Activated CD4-positive, alpha-beta memory T cell treated with anti-CD3 and anti-CD28 coated beads for 36 hours (primary cell): ENCODE measurements at regions of chr12 and their contacts with region 1.

Region 1: DNA sequence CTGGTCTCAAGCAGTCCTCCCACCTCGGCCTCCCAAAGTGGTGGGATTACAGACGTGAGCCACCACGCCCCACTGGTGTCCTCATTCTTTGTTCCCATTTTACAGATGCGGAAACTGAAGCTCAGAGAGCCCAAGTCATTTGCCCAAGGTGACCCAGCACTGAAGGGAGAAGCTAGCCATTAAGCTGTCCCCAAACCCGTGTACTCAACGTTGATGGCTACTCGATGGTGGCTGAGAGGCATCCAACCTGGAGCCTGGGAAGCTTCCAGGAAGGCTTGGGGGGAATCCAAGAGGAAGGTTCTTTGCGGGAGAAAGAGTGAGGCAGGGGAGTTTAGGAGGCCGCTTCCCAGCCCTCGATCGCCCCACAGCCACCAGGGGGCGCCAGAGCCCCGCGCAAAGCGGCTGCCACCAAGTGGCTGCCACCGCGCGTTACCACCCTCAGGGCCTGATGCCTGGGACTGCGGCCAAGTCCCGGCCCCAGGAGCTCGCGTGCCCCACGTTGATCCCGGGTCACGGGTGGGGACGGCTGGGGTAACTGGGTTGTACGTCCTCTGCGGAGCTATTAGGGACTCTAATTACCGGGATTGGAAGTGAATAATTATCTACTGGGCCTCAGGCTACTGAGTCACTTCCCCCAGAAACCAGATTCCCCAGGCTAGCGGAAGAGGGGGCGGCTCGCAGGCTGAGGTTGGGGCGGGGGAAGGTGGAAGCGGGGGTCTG is 8.8 kb upstream of the SH2B3 start:
- DNase-seq: peak; percentile 90
- H3K4me3 Mint-ChIP-seq: peak overlapping the region; percentile 65
- H3K27ac Mint-ChIP-seq: peak overlapping the region; percentile 51
- H3K4me1 Mint-ChIP-seq: peaks cover 25% of the 10 kb centered on the region
- H3K27me3 Mint-ChIP-seq: peaks cover 9% of the 10 kb centered on the region

Region 2: DNA sequence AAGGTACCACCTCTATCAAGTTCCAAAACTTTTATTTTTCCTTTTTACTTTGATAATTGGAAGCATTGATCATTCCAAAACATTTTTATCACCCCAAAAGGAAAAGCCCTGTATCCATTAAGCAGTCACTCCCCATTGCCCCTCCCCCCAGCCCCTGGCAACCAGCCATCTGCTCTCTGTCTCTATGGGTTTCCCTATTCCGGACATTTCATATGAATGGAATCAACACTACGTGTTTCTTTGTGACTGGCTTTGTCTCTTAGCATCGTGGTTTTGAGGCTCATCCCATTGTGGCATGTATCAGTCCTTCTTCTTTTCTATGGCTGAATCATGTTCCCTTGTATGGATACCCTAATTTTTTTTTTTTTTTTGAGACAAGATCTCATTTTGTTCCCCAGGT is 10.0 kb before region 1 on chr12:
- CTCF ChIA-PET with region 1: interaction called, 11 read pairs
- POLR2A ChIA-PET with region 1: no interaction called
- intact Hi-C with region 1: no loop called
- DNase-seq: no peak
- H3K4me3 Mint-ChIP-seq: no peak overlapping the region
- H3K27ac Mint-ChIP-seq: no peak overlapping the region
- H3K4me1 Mint-ChIP-seq: no peaks in the 10 kb centered on the region
- H3K27me3 Mint-ChIP-seq: no peaks in the 10 kb centered on the region

Region 3: DNA sequence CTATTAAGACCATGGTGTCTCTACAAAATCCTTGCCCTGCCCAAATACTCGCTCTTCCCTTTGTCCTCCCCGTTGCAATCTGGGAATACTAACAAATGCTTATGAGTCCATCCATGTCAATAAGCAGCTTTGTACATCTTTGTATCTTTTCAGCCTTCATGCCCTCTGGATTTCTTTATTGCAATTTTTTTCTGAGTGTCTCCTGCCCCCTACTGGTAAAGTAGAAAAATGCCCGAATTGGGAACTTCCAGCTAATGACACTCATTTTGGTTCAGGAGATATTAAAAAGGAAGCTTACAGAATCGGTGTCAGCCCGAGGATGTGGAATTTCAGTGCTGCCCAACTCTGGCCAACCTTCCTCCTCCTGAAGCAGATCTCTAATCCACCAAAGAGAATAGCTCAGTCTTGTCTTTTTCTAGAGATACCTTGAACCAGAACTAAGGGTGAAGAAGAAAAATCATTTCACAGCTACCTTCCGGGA is 54.8 kb after region 1 on chr12:
- CTCF ChIA-PET with region 1: interaction called, 1,161 read pairs
- POLR2A ChIA-PET with region 1: interaction called, 12 read pairs
- intact Hi-C with region 1: loop called (anchors 1 kb)
- DNase-seq: no peak
- H3K4me3 Mint-ChIP-seq: no peak overlapping the region
- H3K27ac Mint-ChIP-seq: peak overlapping the region; percentile 4
- H3K4me1 Mint-ChIP-seq: peaks cover 42% of the 10 kb centered on the region
- H3K27me3 Mint-ChIP-seq: no peaks in the 10 kb centered on the region

Region 4: GRCh38 chr12:111519083-111519482 is 122.2 kb after region 1 on chr12:
- CTCF ChIA-PET with region 1: interaction called, 21 read pairs
- POLR2A ChIA-PET with region 1: no interaction called
- intact Hi-C with region 1: no loop called
- DNase-seq: no peak
- H3K4me3 Mint-ChIP-seq: no peak overlapping the region
- H3K27ac Mint-ChIP-seq: no peak overlapping the region
- H3K4me1 Mint-ChIP-seq: no peaks in the 10 kb centered on the region
- H3K27me3 Mint-ChIP-seq: no peaks in the 10 kb centered on the region

Region 5: DNA sequence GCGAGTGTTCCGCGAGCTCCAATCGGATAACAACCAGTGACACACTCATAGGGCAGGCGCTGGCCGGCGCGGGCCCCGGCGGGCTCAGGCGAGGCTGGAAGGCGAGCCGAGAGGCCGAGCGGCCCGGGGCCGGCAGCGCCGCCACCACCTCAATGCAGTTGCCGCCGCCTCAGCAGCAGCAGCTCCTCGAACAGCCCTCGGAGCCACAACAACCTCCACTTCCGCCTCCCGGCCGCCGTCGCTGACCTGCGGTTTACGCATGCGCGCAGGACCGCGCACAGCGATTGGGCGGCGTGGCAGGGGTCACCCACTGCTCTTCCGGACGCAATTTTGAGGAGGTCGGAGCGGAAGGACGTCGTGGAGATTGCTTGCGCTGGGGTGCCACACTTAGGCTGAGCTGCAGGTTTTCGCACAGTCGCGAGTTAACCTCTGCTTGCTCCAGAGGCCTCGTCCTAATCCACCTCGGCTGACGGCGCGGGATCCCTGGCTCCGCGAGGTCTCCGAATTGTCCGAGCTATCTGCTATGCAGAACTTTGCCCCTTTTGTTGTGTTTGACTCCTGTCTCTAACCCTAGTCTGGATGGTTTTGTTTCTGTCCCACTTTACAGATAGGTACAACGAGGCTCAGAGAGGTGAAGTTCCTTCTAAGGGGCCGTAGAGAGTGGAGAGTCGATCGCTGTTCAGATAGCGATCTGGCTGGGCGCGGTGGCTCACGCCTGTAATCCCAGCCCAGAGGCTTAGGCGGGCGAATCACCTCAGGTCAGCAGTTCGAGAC is 289.0 kb after region 1 on chr12 and contains the starts of genes ACAD10 and BRAP:
- CTCF ChIA-PET with region 1: interaction called, 6 read pairs
- POLR2A ChIA-PET with region 1: no interaction called
- intact Hi-C with region 1: loop called (anchors 1 kb)
- DNase-seq: peak; percentile 97
- H3K4me3 Mint-ChIP-seq: peak within 1 kb of the TSS; percentile 95
- H3K27ac Mint-ChIP-seq: peak within 1 kb of the TSS; percentile 89
- H3K4me1 Mint-ChIP-seq: peaks cover 32% of the 10 kb centered on the region
- H3K27me3 Mint-ChIP-seq: peaks cover 2% of the 10 kb centered on the region
- total RNA-seq, gene ACAD10: 22.5 to 24.2 TPM
- total RNA-seq, gene BRAP: 16.8 to 18.0 TPM